ENCODE measurements at regions of chr9 and their contacts with region 1.

Region 1: GRCh38 chr9:78932830-78933627 is 636.1 kb downstream of the PSAT1 start:
- DNase-seq: peak; percentile 74
- H3K4me3 ChIP-seq: no peak overlapping the region
- H3K27ac ChIP-seq: peak overlapping the region; percentile 90
- H3K4me1 ChIP-seq: peaks cover 19% of the 10 kb centered on the region
- H3K27me3 ChIP-seq: no peaks in the 10 kb centered on the region
- CTCF ChIP-seq: no peak
- POLR2A ChIP-seq: no peak

Region 2: GRCh38 chr9:78871452-78872331 is 61.3 kb before region 1 on chr9:
- CTCF ChIA-PET with region 1: no interaction called
- POLR2A ChIA-PET with region 1: no interaction called
- dilution Hi-C with region 1: no loop called
- intact Hi-C with region 1: loop called (anchors 1 kb)
- DNase-seq: peak; percentile 89
- H3K4me3 ChIP-seq: no peak overlapping the region
- H3K27ac ChIP-seq: peak overlapping the region; percentile 83
- H3K4me1 ChIP-seq: peaks cover 17% of the 10 kb centered on the region
- H3K27me3 ChIP-seq: no peaks in the 10 kb centered on the region
- CTCF ChIP-seq: no peak
- POLR2A ChIP-seq: no peak

Region 3: DNA sequence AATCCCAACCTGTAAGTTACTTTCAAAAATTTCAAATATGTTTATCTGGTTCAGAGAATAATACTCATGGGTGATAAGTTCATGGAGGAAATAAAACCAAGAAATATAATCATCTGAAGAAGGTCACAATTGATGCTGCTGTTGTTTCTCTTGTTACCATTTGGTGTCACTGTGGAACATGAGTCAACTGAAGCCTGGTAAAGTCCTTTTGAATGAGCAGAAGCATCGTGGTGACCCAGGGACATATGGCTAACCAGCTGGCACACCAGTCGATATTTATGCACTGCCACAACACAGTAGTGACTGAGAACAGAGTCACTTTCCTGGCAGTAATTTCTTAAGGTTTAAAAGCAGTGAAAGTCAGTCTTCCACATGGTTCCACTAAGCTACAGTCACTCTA is 25.9 kb after region 1 on chr9:
- CTCF ChIA-PET with region 1: no interaction called
- POLR2A ChIA-PET with region 1: no interaction called
- dilution Hi-C with region 1: no loop called
- intact Hi-C with region 1: no loop called
- DNase-seq: no peak
- H3K4me3 ChIP-seq: no peak overlapping the region
- H3K27ac ChIP-seq: no peak overlapping the region
- H3K4me1 ChIP-seq: no peaks in the 10 kb centered on the region
- H3K27me3 ChIP-seq: no peaks in the 10 kb centered on the region
- CTCF ChIP-seq: peak; percentile 4 to 20
- POLR2A ChIP-seq: no peak